ENCODE measurements at regions of chr3 and their contacts with region 1.

Region 1: GRCh38 chr3:156151824-156152428 is 31.5 kb downstream of the KCNAB1 start:
- DNase-seq: no peak
- ATAC-seq: peak; percentile 82
- H3K4me3 ChIP-seq: no peak overlapping the region
- H3K27ac ChIP-seq: no peak overlapping the region
- H3K4me1 ChIP-seq: no peaks in the 10 kb centered on the region
- H3K27me3 ChIP-seq: no peaks in the 10 kb centered on the region
- CTCF ChIP-seq: peak; percentile 72 to 78 (median 75)
- EP300 ChIP-seq: no peak
- POLR2A ChIP-seq: no peak
- RAD21 ChIP-seq: peak; percentile 85

Region 2: DNA sequence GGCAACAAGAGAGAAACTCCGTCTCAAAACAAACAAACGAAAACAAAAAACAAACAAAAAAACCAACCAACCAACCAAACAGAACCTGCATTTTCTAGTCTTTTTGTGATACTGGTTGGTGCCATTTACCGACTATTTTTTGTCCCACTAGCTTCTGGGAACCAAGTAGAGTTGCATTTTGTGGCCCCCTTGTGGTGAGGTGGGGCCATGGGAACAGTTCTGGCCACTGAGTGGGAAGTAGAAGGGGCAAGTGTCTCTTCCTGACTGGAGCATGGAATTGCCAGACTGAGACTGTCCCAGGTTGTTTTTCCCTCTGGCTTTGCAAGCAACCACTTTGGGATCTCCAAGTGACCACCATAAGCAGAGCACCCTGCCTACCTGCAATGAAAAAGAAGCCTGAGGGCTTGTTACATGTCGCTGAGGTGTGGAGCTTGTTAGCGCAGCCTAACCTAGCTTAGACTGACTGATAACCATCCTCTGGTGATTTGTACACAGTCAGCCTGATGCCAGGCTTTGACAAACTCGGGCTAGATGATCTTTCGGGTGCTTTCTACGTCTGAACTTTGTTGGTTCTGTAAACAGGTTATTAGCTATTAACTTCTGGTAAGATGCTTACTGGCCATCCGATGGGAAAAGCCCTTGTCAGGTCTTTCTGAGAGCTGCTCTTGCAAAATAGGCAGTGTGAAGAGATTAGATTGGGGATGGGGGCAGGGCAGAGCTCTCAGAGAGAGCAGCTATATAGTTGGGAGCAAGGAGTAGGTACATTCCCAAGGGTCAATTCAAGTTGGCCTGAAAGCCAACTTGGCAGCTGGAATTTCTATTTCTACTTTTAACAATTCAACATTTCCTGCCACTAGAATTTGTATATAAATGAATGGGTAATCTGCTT is 230.8 kb after region 1 on chr3:
- CTCF ChIA-PET with region 1: interaction called, 205 read pairs
- POLR2A ChIA-PET with region 1: interaction called, 3 read pairs
- RAD21 ChIA-PET with region 1: interaction called, 70 read pairs
- SMC1A ChIA-PET with region 1: interaction called, 84 read pairs
- in situ Hi-C with region 1: loop called (anchors 5 kb)
- intact Hi-C with region 1: loop called (anchors 1 kb)
- DNase-seq: no peak
- ATAC-seq: peak; percentile 93
- H3K4me3 ChIP-seq: no peak overlapping the region
- H3K27ac ChIP-seq: no peak overlapping the region
- H3K4me1 ChIP-seq: no peaks in the 10 kb centered on the region
- H3K27me3 ChIP-seq: peaks cover 0 to 2% of the 10 kb centered on the region in 2 experiments; a peak in 2 of 4 replicates
- CTCF ChIP-seq: peak; percentile 72 to 81 (median 80)
- EP300 ChIP-seq: no peak
- POLR2A ChIP-seq: no peak
- RAD21 ChIP-seq: peak; percentile 83

Region 3: GRCh38 chr3:156492801-156493261 is 340.9 kb after region 1 on chr3:
- CTCF ChIA-PET with region 1: interaction called, 10 read pairs
- POLR2A ChIA-PET with region 1: no interaction called
- RAD21 ChIA-PET with region 1: no interaction called
- SMC1A ChIA-PET with region 1: no interaction called
- in situ Hi-C with region 1: no loop called
- intact Hi-C with region 1: no loop called
- DNase-seq: no peak
- ATAC-seq: no peak
- H3K4me3 ChIP-seq: no peak overlapping the region
- H3K27ac ChIP-seq: no peak overlapping the region
- H3K4me1 ChIP-seq: peaks cover 14% of the 10 kb centered on the region
- H3K27me3 ChIP-seq: no peaks in the 10 kb centered on the region
- CTCF ChIP-seq: no peak
- EP300 ChIP-seq: no peak
- POLR2A ChIP-seq: no peak
- RAD21 ChIP-seq: no peak

Region 4: GRCh38 chr3:156554842-156555687 is 403.1 kb after region 1 on chr3 and contains the start of gene SSR3:
- CTCF ChIA-PET with region 1: interaction called, 11 read pairs
- POLR2A ChIA-PET with region 1: no interaction called
- RAD21 ChIA-PET with region 1: no interaction called
- SMC1A ChIA-PET with region 1: interaction called, 3 read pairs
- in situ Hi-C with region 1: no loop called
- intact Hi-C with region 1: no loop called
- DNase-seq: peak; percentile 95
- ATAC-seq: peak; percentile 99
- H3K4me3 ChIP-seq: peak within 1 kb of the TSS; percentile 92
- H3K27ac ChIP-seq: peak within 1 kb of the TSS; percentile 83
- H3K4me1 ChIP-seq: peaks cover 2% of the 10 kb centered on the region; the same call in 1 of the 2 replicates
- H3K27me3 ChIP-seq: no peaks in the 10 kb centered on the region
- CTCF ChIP-seq: peak in 1 of 3 experiments; percentile 2; a peak in 1 of 6 replicates
- EP300 ChIP-seq: no peak; a peak in 1 of 4 replicates
- POLR2A ChIP-seq: peak; percentile 95
- RAD21 ChIP-seq: no peak
- polyA plus RNA-seq, gene SSR3: 278 to 345 TPM

Region 5: DNA sequence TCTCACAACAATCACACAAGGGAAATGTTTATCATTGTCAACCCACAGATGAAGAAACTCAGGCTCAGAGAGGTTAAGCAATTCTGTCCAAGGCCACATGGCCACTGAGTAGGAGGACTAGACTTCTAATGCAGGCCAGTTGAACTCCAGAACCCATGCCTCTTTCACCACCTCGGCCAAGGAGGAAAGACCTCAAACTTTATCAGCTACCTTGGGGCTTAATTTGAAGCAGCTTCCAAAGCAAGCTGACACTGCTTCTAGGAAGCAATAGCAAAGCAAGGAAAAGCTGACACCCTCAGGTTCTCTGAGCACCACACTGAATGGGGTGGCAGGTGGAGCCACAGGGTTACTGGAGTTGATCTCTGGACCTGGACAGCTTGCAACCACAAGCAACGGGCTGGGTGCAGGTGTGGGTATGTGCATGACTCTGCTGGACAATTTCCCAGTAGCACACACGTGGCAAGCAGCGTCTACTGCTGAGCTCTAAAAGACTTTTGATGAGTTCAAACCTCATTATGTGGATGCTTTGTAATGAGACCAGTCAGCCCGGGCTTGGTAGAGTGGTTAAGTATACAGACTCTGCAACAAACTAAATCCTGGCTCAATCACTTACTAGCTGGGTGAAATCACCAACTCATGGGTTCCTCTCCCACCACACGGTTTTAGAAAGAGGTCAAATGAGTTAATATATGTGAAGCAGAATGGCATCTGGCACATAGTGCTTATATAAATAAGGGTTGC is 984.9 kb after region 1 on chr3:
- CTCF ChIA-PET with region 1: interaction called, 7 read pairs
- POLR2A ChIA-PET with region 1: no interaction called
- RAD21 ChIA-PET with region 1: no interaction called
- SMC1A ChIA-PET with region 1: interaction called, 3 read pairs
- in situ Hi-C with region 1: loop called (anchors 25 kb)
- intact Hi-C with region 1: loop called (anchors 2 kb)
- DNase-seq: no peak
- ATAC-seq: no peak; the same call in 1 of the 3 replicates
- H3K4me3 ChIP-seq: no peak overlapping the region
- H3K27ac ChIP-seq: no peak overlapping the region
- H3K4me1 ChIP-seq: peaks cover 10% of the 10 kb centered on the region
- H3K27me3 ChIP-seq: no peaks in the 10 kb centered on the region
- CTCF ChIP-seq: no peak
- EP300 ChIP-seq: no peak
- POLR2A ChIP-seq: no peak
- RAD21 ChIP-seq: no peak